Vagina (tissue), 2 donors: ENCODE measurements at regions of chr16 and their contacts with region 1.

Region 1: GRCh38 chr16:77393955-77394354 is 40.9 kb downstream of the ADAMTS18 start:
- DNase-seq: no peak
- H3K4me3 ChIP-seq: no peak overlapping the region
- H3K27ac ChIP-seq: no peak overlapping the region
- H3K4me1 ChIP-seq: no peaks in the 10 kb centered on the region
- H3K27me3 ChIP-seq: no peaks in the 10 kb centered on the region
- CTCF ChIP-seq: no peak
- POLR2A ChIP-seq: no peak

Region 2: DNA sequence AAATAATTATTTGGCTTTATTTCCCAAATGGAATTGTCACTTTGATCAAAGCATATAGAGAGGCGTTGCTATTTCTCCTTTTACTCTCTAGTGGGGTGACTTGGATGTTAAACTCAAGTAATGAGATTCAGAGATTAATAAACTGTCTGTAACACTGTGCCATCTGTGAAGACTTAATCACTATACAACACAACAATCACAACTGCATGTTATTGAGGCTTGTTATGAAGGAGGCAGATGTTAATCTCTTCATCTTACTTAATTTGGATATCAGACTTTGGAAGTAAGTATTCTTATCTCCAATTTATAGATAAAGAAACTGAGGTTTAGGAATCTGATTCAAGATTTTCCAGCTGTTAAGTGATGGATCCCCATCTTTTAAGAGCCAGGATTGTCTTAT is 984.2 kb before region 1 on chr16:
- intact Hi-C with region 1: loop called (anchors 5 kb)
- DNase-seq: no peak
- H3K4me3 ChIP-seq: no peak overlapping the region
- H3K27ac ChIP-seq: no peak overlapping the region
- H3K4me1 ChIP-seq: no peaks in the 10 kb centered on the region
- H3K27me3 ChIP-seq: no peaks in the 10 kb centered on the region
- CTCF ChIP-seq: no peak
- POLR2A ChIP-seq: no peak